ENCODE measurements at regions of chr13 and their contacts with region 1.

Region 1: GRCh38 chr13:49443704-49444523 is at the starts of genes CAB39L and SETDB2:
- DNase-seq: peak; percentile 100
- ATAC-seq: peak; percentile 95
- H3K4me3 Mint-ChIP-seq: peak within 1 kb of the TSS; percentile 89
- H3K27ac Mint-ChIP-seq: peak within 1 kb of the TSS; percentile 95
- H3K4me1 Mint-ChIP-seq: peaks cover 43% of the 10 kb centered on the region
- H3K27me3 Mint-ChIP-seq: no peaks in the 10 kb centered on the region
- CTCF ChIP-seq: peak; percentile 30
- total RNA-seq, gene CAB39L: 2.6 to 3.1 TPM
- total RNA-seq, gene SETDB2: 11.3 to 11.5 TPM

Region 2: GRCh38 chr13:49374585-49375290 is 69.2 kb before region 1 on chr13:
- CTCF ChIA-PET with region 1: no interaction called
- POLR2A ChIA-PET with region 1: no interaction called
- intact Hi-C with region 1: no loop called
- DNase-seq: no peak
- ATAC-seq: no peak
- H3K4me3 Mint-ChIP-seq: no peak overlapping the region
- H3K27ac Mint-ChIP-seq: no peak overlapping the region
- H3K4me1 Mint-ChIP-seq: peaks cover 19% of the 10 kb centered on the region
- H3K27me3 Mint-ChIP-seq: peaks cover 6% of the 10 kb centered on the region
- CTCF ChIP-seq: no peak

Region 3: GRCh38 chr13:49454388-49455006 is 10.6 kb after region 1 on chr13:
- CTCF ChIA-PET with region 1: interaction called, 6 read pairs
- POLR2A ChIA-PET with region 1: interaction called, 21 read pairs
- intact Hi-C with region 1: no loop called
- DNase-seq: no peak
- ATAC-seq: peak; percentile 87
- H3K4me3 Mint-ChIP-seq: no peak overlapping the region
- H3K27ac Mint-ChIP-seq: peak overlapping the region; percentile 22
- H3K4me1 Mint-ChIP-seq: peaks cover 35% of the 10 kb centered on the region
- H3K27me3 Mint-ChIP-seq: no peaks in the 10 kb centered on the region
- CTCF ChIP-seq: no peak

Region 4: DNA sequence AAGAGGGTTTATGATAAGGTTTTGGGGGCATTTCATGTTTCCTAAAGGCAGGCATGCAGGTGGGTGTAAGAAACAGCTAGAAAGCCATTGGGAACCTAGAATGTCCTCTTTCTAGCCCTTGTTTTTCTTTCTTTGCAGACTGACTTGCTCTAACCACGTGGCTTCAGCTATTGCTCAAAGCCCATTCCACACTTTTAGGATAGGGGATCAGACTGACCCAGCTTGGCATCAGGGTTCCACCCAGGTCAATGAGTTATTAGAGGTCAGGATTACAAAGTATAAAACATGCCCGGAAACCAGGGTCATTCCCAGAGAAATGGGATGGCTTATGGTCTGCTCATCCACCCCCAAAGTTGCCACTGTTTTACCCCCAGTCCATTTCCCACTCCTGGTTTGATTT is 68.7 kb after region 1 on chr13:
- CTCF ChIA-PET with region 1: no interaction called
- POLR2A ChIA-PET with region 1: no interaction called
- intact Hi-C with region 1: no loop called
- DNase-seq: no peak
- ATAC-seq: no peak
- H3K4me3 Mint-ChIP-seq: no peak overlapping the region
- H3K27ac Mint-ChIP-seq: peak overlapping the region; percentile 41
- H3K4me1 Mint-ChIP-seq: peaks cover 8% of the 10 kb centered on the region
- H3K27me3 Mint-ChIP-seq: no peaks in the 10 kb centered on the region
- CTCF ChIP-seq: no peak

Region 5: GRCh38 chr13:49627831-49628652 is 184.1 kb after region 1 on chr13 and contains the start of gene ARL11:
- CTCF ChIA-PET with region 1: no interaction called
- POLR2A ChIA-PET with region 1: no interaction called
- intact Hi-C with region 1: no loop called
- DNase-seq: peak; percentile 68
- ATAC-seq: peak; percentile 94
- H3K4me3 Mint-ChIP-seq: peak within 1 kb of the TSS; percentile 75
- H3K27ac Mint-ChIP-seq: peak within 1 kb of the TSS; percentile 66
- H3K4me1 Mint-ChIP-seq: peaks cover 7% of the 10 kb centered on the region
- H3K27me3 Mint-ChIP-seq: no peaks in the 10 kb centered on the region
- CTCF ChIP-seq: no peak
- total RNA-seq, gene ARL11: 0.29 to 0.61 TPM